Activated CD8-positive, alpha-beta T cell treated with anti-CD3 and anti-CD28 coated beads, Interleukin-2, amount 10 ng/mL, durations not matched to agents 7 days and 5 days (primary cell): ENCODE measurements at regions of chr7 and their contacts with region 1.

Region 1: GRCh38 chr7:108135446-108136190 is 5.5 kb upstream of the LAMB4 start:
- DNase-seq: peak; percentile 70
- ATAC-seq: peak; percentile 96
- H3K4me3 Mint-ChIP-seq: peak overlapping the region; percentile 12
- H3K27ac Mint-ChIP-seq: peak overlapping the region; percentile 86
- H3K4me1 Mint-ChIP-seq: peaks cover 39% of the 10 kb centered on the region
- H3K27me3 Mint-ChIP-seq: no peaks in the 10 kb centered on the region

Region 2: GRCh38 chr7:108146070-108146837 is 10.6 kb after region 1 on chr7:
- CTCF ChIA-PET with region 1: interaction called, 29 read pairs
- POLR2A ChIA-PET with region 1: interaction called, 3 read pairs
- DNase-seq: peak; percentile 72
- ATAC-seq: peak; percentile 70
- H3K4me3 Mint-ChIP-seq: no peak overlapping the region
- H3K27ac Mint-ChIP-seq: no peak overlapping the region
- H3K4me1 Mint-ChIP-seq: peaks cover 4% of the 10 kb centered on the region
- H3K27me3 Mint-ChIP-seq: no peaks in the 10 kb centered on the region